ENCODE measurements at regions of chr19 and their contacts with region 1.

Region 1: DNA sequence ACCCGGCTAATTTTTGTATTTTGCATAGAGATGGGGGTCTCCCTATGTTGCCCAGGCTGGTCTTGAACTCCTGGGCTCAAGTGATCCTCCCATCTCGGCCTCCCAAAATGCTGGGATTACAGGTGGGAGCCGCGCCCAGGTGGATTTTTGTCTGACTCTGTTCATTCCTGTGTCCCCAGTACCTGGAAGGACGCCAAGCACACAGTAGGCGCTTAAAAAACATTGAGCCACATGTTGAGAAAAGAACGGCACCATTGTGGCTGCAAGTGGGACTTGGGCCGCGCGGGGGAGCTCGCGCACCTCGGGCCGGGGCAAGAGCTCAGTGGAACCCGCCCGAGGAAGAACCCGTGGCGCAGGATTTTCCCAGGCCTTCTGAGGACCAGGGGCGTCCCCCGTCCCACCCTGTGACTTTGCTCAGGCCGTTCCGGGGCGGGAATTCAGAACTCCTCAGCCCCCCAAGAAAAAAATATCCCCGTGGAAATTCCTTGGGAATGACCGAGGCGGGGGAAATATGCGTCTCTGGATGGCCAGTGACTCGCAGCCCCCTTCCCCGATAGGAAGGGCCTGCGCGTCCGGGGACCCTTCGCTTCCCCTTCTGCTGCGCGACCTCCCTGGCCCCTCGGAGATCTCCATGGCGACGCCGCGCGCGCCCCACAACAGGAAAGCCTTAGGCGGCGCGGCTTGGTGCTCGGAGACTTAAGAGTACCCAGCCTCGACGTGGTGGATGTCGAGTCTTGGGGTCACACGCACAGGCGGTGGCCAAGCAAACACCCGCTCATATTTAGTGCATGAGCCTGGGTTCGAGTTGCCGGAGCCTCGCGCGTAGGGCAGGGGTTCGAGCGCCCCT is 1.4 kb upstream of the ICAM1 start:
- DNase-seq: peak; percentile 90
- H3K4me3 Mint-ChIP-seq: peak overlapping the region; percentile 79
- H3K27ac Mint-ChIP-seq: peak overlapping the region; percentile 89
- H3K4me1 Mint-ChIP-seq: peaks cover 40% of the 10 kb centered on the region
- H3K27me3 Mint-ChIP-seq: peaks cover 13% of the 10 kb centered on the region

Region 2: DNA sequence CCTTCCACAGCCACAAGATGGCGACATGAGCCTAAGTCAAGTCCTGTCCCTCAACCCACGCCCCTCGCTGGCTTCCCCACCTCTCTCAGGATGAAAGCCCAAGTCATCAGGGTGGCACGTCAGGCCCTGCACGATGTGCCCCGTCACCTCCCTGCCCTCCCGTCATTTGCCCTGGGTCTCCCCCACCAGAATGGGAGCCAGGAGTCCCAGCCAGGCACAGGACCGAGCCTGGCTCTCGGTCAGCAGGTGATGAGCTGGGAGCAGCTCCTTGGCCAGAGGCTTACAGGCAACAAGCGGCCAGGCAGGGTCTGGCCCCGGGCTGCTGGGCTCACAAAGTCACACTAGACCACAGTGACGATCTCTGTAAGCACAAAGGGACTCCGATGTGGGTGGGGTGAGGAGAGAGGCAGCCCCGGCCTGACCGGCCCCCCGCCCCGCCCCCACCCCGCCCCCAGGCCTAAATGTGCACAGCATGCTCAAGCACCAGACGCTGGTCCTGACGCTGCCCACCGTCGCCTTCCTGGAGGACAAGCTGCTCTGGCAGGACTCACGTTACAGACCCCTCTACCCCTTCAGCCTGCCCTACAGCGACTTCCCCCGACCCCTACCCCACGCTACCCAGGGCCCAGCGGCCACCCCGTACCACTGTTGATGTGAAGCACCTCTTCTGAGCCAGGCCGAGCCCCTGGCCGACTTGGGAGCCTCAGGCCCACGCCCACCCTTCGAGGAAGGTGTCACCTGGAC is 10.2 kb before region 1 on chr19:
- CTCF ChIA-PET with region 1: interaction called, 65 read pairs
- DNase-seq: peak; percentile 96
- H3K4me3 Mint-ChIP-seq: no peak overlapping the region
- H3K27ac Mint-ChIP-seq: peak overlapping the region; percentile 72
- H3K4me1 Mint-ChIP-seq: peaks cover 14% of the 10 kb centered on the region
- H3K27me3 Mint-ChIP-seq: no peaks in the 10 kb centered on the region

Region 3: GRCh38 chr19:10279737-10280442 is 10.3 kb after region 1 on chr19:
- CTCF ChIA-PET with region 1: interaction called, 15 read pairs
- DNase-seq: no peak
- H3K4me3 Mint-ChIP-seq: no peak overlapping the region
- H3K27ac Mint-ChIP-seq: peak overlapping the region; percentile 46
- H3K4me1 Mint-ChIP-seq: peaks cover 19% of the 10 kb centered on the region
- H3K27me3 Mint-ChIP-seq: no peaks in the 10 kb centered on the region

Region 4: DNA sequence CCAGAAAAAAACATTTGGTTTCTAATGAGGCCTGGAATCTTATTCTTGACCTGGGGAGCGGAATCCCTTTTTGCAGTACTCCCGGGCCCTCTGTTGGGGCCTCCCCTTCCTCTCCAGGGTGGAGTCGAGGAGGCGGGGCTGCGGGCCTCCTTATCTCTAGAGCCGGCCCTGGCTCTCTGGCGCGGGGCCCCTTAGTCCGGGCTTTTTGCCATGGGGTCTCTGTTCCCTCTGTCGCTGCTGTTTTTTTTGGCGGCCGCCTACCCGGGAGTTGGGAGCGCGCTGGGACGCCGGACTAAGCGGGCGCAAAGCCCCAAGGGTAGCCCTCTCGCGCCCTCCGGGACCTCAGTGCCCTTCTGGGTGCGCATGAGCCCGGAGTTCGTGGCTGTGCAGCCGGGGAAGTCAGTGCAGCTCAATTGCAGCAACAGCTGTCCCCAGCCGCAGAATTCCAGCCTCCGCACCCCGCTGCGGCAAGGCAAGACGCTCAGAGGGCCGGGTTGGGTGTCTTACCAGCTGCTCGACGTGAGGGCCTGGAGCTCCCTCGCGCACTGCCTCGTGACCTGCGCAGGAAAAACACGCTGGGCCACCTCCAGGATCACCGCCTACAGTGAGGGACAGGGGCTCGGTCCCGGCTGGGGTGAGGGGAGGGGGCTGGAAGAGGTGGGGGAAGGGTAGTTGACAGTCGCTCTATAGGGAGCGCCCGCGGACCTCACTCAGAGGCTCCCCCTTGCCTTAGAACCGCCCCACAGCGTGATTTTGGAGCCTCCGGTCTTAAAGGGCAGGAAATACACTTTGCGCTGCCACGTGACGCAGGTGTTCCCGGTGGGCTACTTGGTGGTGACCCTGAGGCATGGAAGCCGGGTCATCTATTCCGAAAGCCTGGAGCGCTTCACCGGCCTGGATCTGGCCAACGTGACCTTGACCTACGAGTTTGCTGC is 17.5 kb after region 1 on chr19 and contains the start of gene ICAM4:
- CTCF ChIA-PET with region 1: interaction called, 20 read pairs
- DNase-seq: peak; percentile 75
- H3K4me3 Mint-ChIP-seq: peak within 1 kb of the TSS; percentile 63
- H3K27ac Mint-ChIP-seq: peak within 1 kb of the TSS; percentile 84
- H3K4me1 Mint-ChIP-seq: peaks cover 65% of the 10 kb centered on the region
- H3K27me3 Mint-ChIP-seq: peaks cover 58% of the 10 kb centered on the region

Region 5: GRCh38 chr19:10292206-10292788 is 22.7 kb after region 1 on chr19:
- CTCF ChIA-PET with region 1: interaction called, 20 read pairs
- DNase-seq: peak; percentile 75
- H3K4me3 Mint-ChIP-seq: peak overlapping the region; percentile 54
- H3K27ac Mint-ChIP-seq: peak overlapping the region; percentile 68
- H3K4me1 Mint-ChIP-seq: peaks cover 72% of the 10 kb centered on the region
- H3K27me3 Mint-ChIP-seq: peaks cover 100% of the 10 kb centered on the region

Region 6: DNA sequence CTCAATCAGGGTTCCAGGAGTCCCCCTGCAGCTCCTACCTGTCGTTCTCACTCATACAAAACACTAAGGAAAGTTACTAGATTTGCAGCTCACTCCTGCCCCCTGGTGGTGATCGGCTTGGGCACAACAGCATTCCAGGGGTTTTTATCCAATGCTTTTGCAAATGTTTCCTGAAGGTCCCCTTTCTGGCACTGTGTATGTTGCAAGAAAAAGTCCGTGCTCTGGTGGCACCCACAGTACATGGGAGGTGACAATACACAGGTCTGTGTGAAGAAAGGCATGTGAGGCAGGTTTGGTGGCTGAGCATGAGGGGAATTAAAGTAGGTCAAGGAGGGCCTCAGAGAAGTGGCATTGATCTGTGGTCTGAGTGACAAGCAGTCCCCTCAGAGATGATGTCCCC is 119.4 kb after region 1 on chr19:
- CTCF ChIA-PET with region 1: interaction called, 133 read pairs
- DNase-seq: peak; percentile 87
- H3K4me3 Mint-ChIP-seq: no peak overlapping the region
- H3K27ac Mint-ChIP-seq: peak overlapping the region; percentile 12
- H3K4me1 Mint-ChIP-seq: no peaks in the 10 kb centered on the region
- H3K27me3 Mint-ChIP-seq: peaks cover 9% of the 10 kb centered on the region

Measured in activated naive CD4-positive, alpha-beta T cell treated with anti-CD3 and anti-CD28 coated beads, Interleukin-2, amount 10 ng/mL, durations not matched to agents 7 days and 5 days (primary cell).